Psoas muscle (tissue), 8 donors: ENCODE measurements at regions of chr9 and their contacts with region 1.

Region 1: GRCh38 chr9:125241000-125241862 is at the start of gene HSPA5:
- DNase-seq: peak; percentile 99 to 100
- ATAC-seq: peak; percentile 95 to 97 (median 96)
- H3K4me3 ChIP-seq: peak within 1 kb of the TSS; percentile 95
- H3K27ac ChIP-seq: peak within 1 kb of the TSS; percentile 99
- H3K4me1 ChIP-seq: peaks cover 43% of the 10 kb centered on the region
- H3K27me3 ChIP-seq: no peaks in the 10 kb centered on the region
- CTCF ChIP-seq: no peak
- total RNA-seq, gene HSPA5: 53.2 to 160 (median 84.6) TPM

Region 2: DNA sequence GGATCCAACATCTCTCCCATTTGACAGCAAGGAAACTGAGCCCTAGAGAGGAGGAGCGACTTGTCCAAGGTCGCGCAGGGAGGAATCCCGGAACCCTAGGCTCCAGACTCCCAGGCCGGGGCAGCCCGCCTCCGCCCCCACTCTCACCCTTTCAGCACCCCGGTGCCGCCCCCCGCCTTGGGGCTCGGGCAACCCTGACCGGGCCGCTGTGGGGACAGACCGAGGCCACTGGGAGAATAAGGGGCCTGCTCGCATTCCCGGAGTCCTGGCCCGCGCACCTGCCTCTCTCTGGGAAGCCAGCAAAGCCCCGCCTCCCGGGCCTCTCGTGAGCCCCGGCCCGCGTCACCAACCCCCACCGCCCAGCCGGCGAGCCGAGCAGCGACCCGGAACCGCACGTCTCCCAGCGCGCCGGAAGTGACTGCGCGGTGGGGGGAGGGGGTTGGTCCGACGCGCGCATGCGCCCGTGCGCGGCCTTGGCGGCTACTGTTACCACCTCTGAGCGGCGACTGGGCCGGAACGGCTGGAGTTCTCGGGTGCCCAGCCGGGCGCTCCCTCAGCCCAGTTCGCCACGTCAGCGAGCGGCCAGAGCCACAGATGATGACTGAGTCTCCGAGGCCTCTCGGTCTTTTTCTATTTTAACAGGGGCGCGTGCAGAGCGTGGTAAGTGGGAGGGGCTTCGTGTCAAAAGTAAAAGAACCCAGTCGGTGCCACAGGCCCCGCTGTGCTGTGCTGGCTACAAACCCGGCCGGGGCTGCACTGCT is 300.4 kb before region 1 on chr9 and contains the start of gene GOLGA1:
- intact Hi-C with region 1: loop called in 1 of 2 experiments (anchors 5 kb)
- DNase-seq: peak; percentile 97 to 98
- ATAC-seq: peak; percentile 96 to 98 (median 97)
- H3K4me3 ChIP-seq: peak within 1 kb of the TSS; percentile 86
- H3K27ac ChIP-seq: peak within 1 kb of the TSS; percentile 99
- H3K4me1 ChIP-seq: peaks cover 21% of the 10 kb centered on the region
- H3K27me3 ChIP-seq: no peaks in the 10 kb centered on the region
- CTCF ChIP-seq: no peak
- total RNA-seq, gene GOLGA1: 13.3 to 23.0 (median 17.0) TPM

Region 3: GRCh38 chr9:125200210-125201047 is 40.8 kb before region 1 on chr9 and contains the start of gene RABEPK:
- intact Hi-C with region 1: loop called in 1 of 2 experiments (anchors 5 kb)
- DNase-seq: peak; percentile 94 to 96
- ATAC-seq: peak; percentile 98 to 100 (median 99)
- H3K4me3 ChIP-seq: peak within 1 kb of the TSS; percentile 79
- H3K27ac ChIP-seq: peak within 1 kb of the TSS; percentile 88
- H3K4me1 ChIP-seq: peaks cover 7% of the 10 kb centered on the region
- H3K27me3 ChIP-seq: no peaks in the 10 kb centered on the region
- CTCF ChIP-seq: no peak
- total RNA-seq, gene RABEPK: 8.8 to 12.5 (median 9.7) TPM

Region 4: GRCh38 chr9:125255781-125256391 is 14.7 kb after region 1 on chr9:
- intact Hi-C with region 1: loop called in 1 of 2 experiments (anchors 2 kb)
- DNase-seq: no peak
- ATAC-seq: peak in 3 of 4 donors; percentile 64 to 80 (median 68)
- H3K4me3 ChIP-seq: no peak overlapping the region
- H3K27ac ChIP-seq: no peak overlapping the region
- H3K4me1 ChIP-seq: no peaks in the 10 kb centered on the region
- H3K27me3 ChIP-seq: no peaks in the 10 kb centered on the region
- CTCF ChIP-seq: peak; percentile 38